ENCODE measurements at regions of chr4 and their contacts with region 1.

Region 1: DNA sequence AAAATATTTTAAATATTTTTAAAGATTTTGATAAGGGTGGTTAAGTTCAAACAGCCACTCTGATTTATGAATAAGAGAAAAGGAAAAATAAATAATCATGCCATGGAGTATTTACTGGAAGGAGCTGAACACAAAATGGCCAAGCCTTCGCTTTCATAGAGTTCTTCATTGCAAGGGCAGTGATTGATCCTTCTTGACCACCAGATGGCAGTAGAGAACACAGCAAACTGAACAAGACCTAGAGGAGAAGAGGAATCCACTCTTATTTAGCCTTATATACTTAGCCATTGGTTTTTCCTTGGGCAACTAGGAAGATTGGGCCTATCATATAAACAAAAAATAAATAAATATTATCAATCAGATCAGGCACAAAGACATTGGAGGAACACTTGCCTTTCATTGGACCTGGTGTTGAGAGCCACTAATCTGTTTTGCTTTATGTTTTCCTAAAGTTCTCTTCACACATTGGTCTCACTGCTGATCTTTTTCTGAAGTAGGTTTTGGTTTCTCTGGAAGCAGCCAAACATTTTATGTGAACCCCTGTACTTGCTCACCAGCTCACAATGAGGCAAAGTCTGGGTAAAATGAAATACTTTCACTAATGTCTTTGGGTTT is 58.1 kb upstream of the PARM1 start:
- DNase-seq: no peak
- H3K4me3 Mint-ChIP-seq: no peak overlapping the region
- H3K27ac Mint-ChIP-seq: no peak overlapping the region
- H3K4me1 Mint-ChIP-seq: no peaks in the 10 kb centered on the region
- H3K27me3 Mint-ChIP-seq: peaks cover 1% of the 10 kb centered on the region

Region 2: GRCh38 chr4:75069493-75070074 is 194.7 kb after region 1 on chr4:
- intact Hi-C with region 1: no loop called
- DNase-seq: no peak
- H3K4me3 Mint-ChIP-seq: no peak overlapping the region
- H3K27ac Mint-ChIP-seq: no peak overlapping the region
- H3K4me1 Mint-ChIP-seq: no peaks in the 10 kb centered on the region
- H3K27me3 Mint-ChIP-seq: no peaks in the 10 kb centered on the region

Region 3: DNA sequence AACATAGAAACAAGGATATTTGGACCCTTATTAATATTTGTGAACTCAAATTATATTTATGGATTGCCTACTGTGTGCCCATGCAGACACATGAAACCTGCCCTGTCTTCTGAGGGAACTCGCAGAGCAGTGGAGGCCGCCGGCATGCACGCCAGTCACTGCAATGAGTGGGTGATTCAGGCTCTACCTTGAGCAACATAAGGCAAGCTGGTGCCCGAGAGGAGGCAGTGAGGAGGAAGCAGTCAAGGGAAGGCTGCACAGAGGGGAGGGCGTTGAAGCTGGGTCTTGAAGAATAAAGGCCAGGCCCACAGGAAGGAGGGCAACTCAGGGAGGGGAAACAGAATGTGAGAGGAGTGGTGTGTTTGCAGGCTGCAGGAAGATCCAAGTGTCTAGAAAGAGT is 974.6 kb after region 1 on chr4:
- intact Hi-C with region 1: loop called (anchors 5 kb)
- DNase-seq: no peak
- H3K4me3 Mint-ChIP-seq: no peak overlapping the region
- H3K27ac Mint-ChIP-seq: no peak overlapping the region
- H3K4me1 Mint-ChIP-seq: peaks cover 10% of the 10 kb centered on the region
- H3K27me3 Mint-ChIP-seq: peaks cover 4% of the 10 kb centered on the region

Measured in activated T-helper 2 cell treated with anti-CD3 and anti-CD28 coated beads, Interferon-gamma antibody, Interleukin-2, Interleukin-4, amounts not matched to agents 10 μg/mL and 5 μg/mL and 100 μg/mL, durations not matched to agents 14 hours and 24 hours and 36 hours (primary cell).